A549 (cell line): ENCODE measurements at regions of chr7 and their contacts with region 1.

Region 1: DNA sequence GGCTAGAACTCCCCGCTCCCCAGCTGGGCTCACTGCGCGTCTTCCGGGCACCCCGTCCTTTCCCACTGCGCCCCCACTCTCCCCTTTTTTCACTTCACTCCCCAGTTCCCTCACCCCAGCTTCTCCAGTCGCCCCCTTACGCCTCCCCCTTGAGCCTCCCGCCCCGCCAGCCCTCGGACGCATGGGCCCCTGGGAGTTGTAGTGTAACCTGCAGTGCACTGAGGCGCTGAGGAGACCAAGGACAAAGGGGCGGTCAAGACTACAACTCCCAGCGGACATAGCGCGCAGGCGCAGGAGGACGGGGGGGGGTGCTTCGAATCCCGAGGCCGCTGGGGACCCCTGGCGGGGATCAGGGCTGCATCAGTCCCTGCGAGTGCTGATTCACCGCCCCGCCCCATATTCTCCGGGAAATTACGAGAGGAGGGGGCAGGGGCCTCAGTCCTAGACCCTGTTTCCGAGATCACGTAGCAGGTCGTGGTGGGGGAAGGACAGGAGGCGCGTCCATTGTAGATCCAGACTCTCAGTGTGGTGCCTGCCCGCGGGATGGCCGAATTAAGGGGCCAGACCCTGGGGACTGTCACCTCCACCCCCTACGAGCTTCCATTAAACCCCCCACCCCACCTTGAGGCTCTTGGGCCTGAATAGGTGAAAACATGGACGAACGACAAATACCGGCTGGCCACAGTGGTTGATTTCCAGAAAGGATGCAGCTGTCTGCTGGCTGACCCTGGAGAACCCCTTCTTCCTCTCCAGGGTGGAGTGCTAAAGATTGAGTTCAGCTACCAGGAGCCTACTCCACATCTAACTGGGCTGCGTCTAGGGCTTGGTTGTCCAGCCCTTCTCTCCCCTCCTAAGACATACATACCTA is 554 bp upstream of the YWHAG start:
- DNase-seq: peak; percentile 90 to 99
- ATAC-seq: peak; percentile 89 to 93
- H3K4me3 ChIP-seq: peak overlapping the region; percentile 96
- H3K27ac ChIP-seq: peak overlapping the region; percentile 100
- H3K4me1 ChIP-seq: peaks cover 40% of the 10 kb centered on the region
- CTCF ChIP-seq: peak; percentile 63
- EP300 ChIP-seq: no peak; a peak in 1 of 5 replicates
- POLR2A ChIP-seq: peak; percentile 26; the same call in 1 of the 2 replicates
- RAD21 ChIP-seq: peak; percentile 59 to 78

Region 2: GRCh38 chr7:76257973-76258372 is 101.4 kb before region 1 on chr7:
- CTCF ChIA-PET with region 1: no interaction called
- POLR2A ChIA-PET with region 1: no interaction called
- DNase-seq: peak in 1 of 2 experiments; percentile 45
- ATAC-seq: peak; percentile 28 to 38; a peak in 4 of 6 replicates
- H3K4me3 ChIP-seq: no peak overlapping the region
- H3K27ac ChIP-seq: no peak overlapping the region
- H3K4me1 ChIP-seq: 0 out of 3 replicates have a peak, but pooled peaks cover 2% of the 10 kb centered on the region
- CTCF ChIP-seq: no peak
- EP300 ChIP-seq: no peak
- POLR2A ChIP-seq: no peak
- RAD21 ChIP-seq: 0 out of 5 replicates have a peak, but pooled peaks of 1 of the 2 experiments have one; percentile 16

Region 3: GRCh38 chr7:76327610-76328009 is 31.7 kb before region 1 on chr7:
- CTCF ChIA-PET with region 1: interaction called, 6 read pairs
- POLR2A ChIA-PET with region 1: interaction called, 12 read pairs
- DNase-seq: no peak
- ATAC-seq: no peak
- H3K4me3 ChIP-seq: no peak overlapping the region
- H3K27ac ChIP-seq: peak overlapping the region in 1 of 2 experiments; percentile 17; a peak in 3 of 6 replicates
- H3K4me1 ChIP-seq: peaks cover 48% of the 10 kb centered on the region
- CTCF ChIP-seq: no peak
- EP300 ChIP-seq: no peak
- POLR2A ChIP-seq: no peak
- RAD21 ChIP-seq: no peak

Region 4: GRCh38 chr7:76347710-76348109 is 11.6 kb before region 1 on chr7:
- CTCF ChIA-PET with region 1: interaction called, 17 read pairs
- POLR2A ChIA-PET with region 1: interaction called, 7 read pairs
- DNase-seq: no peak
- ATAC-seq: no peak
- H3K4me3 ChIP-seq: no peak overlapping the region
- H3K27ac ChIP-seq: no peak overlapping the region
- H3K4me1 ChIP-seq: peaks cover 89% of the 10 kb centered on the region
- CTCF ChIP-seq: no peak
- EP300 ChIP-seq: no peak
- POLR2A ChIP-seq: no peak
- RAD21 ChIP-seq: no peak

Region 5: DNA sequence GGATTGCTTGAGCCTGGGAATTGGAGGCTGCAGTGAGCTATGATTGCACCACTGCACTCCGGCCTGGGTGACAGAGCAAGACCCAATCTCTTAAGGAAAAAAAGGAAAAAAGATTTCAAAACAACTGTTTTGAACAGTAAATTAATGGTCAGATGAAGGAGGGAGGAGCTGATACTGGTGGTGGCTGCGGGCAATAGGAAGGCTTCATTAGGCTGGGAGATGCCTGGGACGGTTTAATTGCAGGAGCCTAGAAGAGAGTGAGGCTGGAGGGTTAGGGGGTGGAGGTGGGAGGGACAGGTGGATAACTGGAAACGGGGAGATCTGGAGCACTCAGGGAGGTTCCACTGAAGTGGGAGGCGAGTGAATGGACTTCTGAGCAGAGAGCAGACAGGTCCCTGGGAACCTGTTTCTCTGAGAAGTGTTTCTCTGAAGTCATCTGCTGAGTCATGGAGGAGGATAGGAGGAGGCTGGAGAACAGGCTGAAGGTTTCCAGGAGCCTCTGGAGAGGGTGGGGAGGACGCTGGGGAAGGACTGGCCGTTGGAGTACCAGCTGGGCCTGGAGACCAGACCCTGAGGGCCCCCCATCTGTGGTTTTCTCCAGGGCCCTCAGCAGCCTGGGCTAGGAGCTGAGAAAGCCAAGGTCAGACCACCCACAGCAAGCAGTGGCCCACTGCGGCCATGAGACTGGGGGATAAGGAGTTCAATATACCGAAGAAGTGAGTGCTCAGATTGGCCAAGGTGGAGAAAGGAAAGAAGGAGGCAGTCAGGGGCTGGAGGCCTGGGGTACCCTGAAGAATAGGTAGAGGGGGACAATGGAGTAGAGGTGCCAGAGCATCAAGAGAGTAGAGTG is 13.9 kb after region 1 on chr7:
- CTCF ChIA-PET with region 1: interaction called, 28 read pairs
- POLR2A ChIA-PET with region 1: interaction called, 18 read pairs
- DNase-seq: peak; percentile 83 to 86
- ATAC-seq: peak; percentile 83 to 86
- H3K4me3 ChIP-seq: no peak overlapping the region
- H3K27ac ChIP-seq: peak overlapping the region; percentile 94 to 96
- H3K4me1 ChIP-seq: peaks cover 50% of the 10 kb centered on the region
- CTCF ChIP-seq: no peak
- EP300 ChIP-seq: no peak
- POLR2A ChIP-seq: peak; percentile 12; the same call in 1 of the 2 replicates
- RAD21 ChIP-seq: no peak

Region 6: GRCh38 chr7:76393116-76394031 is 34.0 kb after region 1 on chr7:
- CTCF ChIA-PET with region 1: interaction called, 7 read pairs
- POLR2A ChIA-PET with region 1: interaction called, 18 read pairs
- DNase-seq: peak; percentile 91 to 92
- ATAC-seq: peak; percentile 74 to 80
- H3K4me3 ChIP-seq: peak overlapping the region; percentile 53
- H3K27ac ChIP-seq: peak overlapping the region; percentile 88 to 96
- H3K4me1 ChIP-seq: peaks cover 39% of the 10 kb centered on the region
- CTCF ChIP-seq: no peak
- EP300 ChIP-seq: no peak
- POLR2A ChIP-seq: peak; percentile 65
- RAD21 ChIP-seq: no peak

Region 7: GRCh38 chr7:76424721-76425511 is 65.6 kb after region 1 on chr7 and contains the start of gene ZP3:
- CTCF ChIA-PET with region 1: interaction called, 10 read pairs
- POLR2A ChIA-PET with region 1: interaction called, 8 read pairs
- DNase-seq: no peak
- ATAC-seq: peak in 1 of 2 experiments; percentile 12; a peak in 1 of 6 replicates
- H3K4me3 ChIP-seq: no peak within 1 kb of the TSS
- H3K27ac ChIP-seq: peak within 1 kb of the TSS; percentile 71 to 83
- H3K4me1 ChIP-seq: peaks cover 43% of the 10 kb centered on the region
- CTCF ChIP-seq: no peak
- EP300 ChIP-seq: no peak
- POLR2A ChIP-seq: no peak
- RAD21 ChIP-seq: no peak
- polyA plus RNA-seq, gene ZP3: 26.5 and 38.6 TPM in 2 replicates